ENCODE measurements at regions of chr5 and their contacts with region 1.

Region 1: DNA sequence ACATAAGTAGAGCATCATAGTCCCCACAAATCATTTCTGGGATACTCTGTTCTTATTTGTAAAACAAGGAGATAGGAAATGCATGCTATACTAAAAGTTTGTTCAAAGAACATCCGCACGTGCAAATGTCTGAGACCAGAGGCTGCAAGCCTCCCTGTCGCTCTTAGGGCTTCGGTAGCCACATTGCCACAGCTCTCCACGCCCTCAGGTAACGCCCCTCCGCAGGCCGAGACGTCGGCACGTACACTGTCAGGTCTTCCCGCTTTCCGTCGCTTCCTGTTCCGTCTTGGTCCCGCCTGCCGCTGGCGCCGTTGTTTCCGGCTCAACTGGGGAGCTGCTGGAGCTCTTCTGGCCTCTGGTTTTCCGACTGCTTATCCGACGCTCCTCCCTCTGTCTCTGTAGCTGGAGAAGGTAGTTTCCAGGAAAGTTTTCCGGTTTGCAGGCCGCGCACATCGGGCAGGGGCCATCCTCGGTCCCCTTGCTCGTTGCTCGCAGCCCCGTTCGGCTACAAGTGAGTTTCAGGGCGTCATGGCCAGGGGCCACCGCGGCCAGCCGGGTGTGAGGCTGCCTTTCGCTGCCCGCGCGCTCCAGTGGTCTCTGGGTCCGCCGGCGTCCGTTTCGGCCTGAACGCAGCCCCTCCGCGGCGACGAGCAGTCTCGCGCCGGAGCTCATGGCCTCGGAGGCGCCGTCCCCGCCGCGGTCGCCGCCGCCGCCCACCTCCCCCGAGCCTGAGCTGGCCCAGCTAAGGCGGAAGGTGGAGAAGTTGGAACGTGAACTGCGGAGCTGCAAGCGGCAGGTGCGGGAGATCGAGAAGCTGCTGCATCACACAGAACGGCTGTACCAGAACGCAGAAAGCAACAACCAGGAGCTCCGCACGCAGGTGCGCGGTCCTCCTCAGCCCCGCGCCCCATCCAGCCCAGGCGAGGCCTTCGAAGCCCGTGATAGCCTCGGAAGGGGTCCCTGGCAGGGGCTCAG is at the start of gene AGGF1:
- DNase-seq: peak; percentile 95
- H3K4me3 ChIP-seq: peak within 1 kb of the TSS; percentile 89 to 98 (median 92)
- H3K27ac ChIP-seq: peak within 1 kb of the TSS; percentile 93 to 96 (median 96)
- H3K4me1 ChIP-seq: peaks cover 6 to 19% (median 11%) of the 10 kb centered on the region in 4 donors
- H3K27me3 ChIP-seq: no peaks in the 10 kb centered on the region
- CTCF ChIP-seq: no peak
- EP300 ChIP-seq: no peak
- POLR2A ChIP-seq: peak; percentile 85
- total RNA-seq, gene AGGF1: 30.6 to 69.6 (median 50.1) TPM

Region 2: DNA sequence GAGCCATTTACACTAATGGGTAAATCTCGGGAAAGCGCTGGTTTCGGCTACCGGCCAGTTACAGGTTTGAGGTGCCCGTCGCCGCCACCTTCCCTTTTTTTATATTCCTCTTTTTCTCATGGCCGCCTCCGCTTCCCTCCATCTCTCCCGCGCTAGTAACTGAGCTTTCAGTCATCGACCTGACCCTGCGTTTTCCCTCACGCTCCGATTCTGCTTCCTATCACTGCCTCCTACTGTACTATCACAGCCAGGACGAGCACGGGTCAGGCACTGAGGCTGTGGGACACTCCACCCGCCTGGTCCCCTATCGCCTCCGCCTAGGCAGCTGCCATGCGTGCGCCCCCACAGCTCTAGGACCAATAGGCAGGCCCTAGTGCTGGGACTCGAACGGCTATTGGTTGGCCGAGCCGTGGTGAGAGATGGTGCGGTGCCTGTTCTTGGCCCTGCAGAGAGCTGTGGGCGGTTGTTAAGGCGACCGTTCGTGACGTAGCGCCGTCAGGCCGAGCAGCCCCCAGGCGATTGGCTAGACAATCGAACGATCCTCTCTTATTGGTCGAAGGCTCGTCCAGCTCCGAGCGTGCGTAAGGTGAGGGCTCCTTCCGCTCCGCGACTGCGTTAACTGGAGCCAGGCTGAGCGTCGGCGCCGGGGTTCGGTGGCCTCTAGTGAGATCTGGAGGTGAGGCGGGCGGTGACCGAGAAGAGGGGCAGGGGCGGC is 1693.6 kb before region 1 on chr5 and contains the start of gene HMGCR:
- in situ Hi-C with region 1: no loop called
- intact Hi-C with region 1: loop called (anchors 10 kb)
- DNase-seq: peak; percentile 99
- H3K4me3 ChIP-seq: peak within 1 kb of the TSS; percentile 70 to 92 (median 78)
- H3K27ac ChIP-seq: peak within 1 kb of the TSS; percentile 88 to 96 (median 93)
- H3K4me1 ChIP-seq: peaks cover 0 to 41% (median 12%) of the 10 kb centered on the region in 4 donors
- H3K27me3 ChIP-seq: no peaks in the 10 kb centered on the region
- CTCF ChIP-seq: peak in 3 of 5 experiments; percentile 5 to 57 (median 20)
- EP300 ChIP-seq: no peak
- POLR2A ChIP-seq: peak; percentile 95
- total RNA-seq, gene HMGCR: 44.9 to 205 (median 99.5) TPM

Region 3: GRCh38 chr5:75753182-75753581 is 1277.2 kb before region 1 on chr5:
- in situ Hi-C with region 1: no loop called
- intact Hi-C with region 1: no loop called
- DNase-seq: no peak
- H3K4me3 ChIP-seq: no peak overlapping the region
- H3K27ac ChIP-seq: no peak overlapping the region
- H3K4me1 ChIP-seq: no peaks in the 10 kb centered on the region
- H3K27me3 ChIP-seq: peaks cover 11% of the 10 kb centered on the region
- CTCF ChIP-seq: no peak
- EP300 ChIP-seq: no peak
- POLR2A ChIP-seq: no peak

Region 4: GRCh38 chr5:76867827-76868693 is 162.3 kb before region 1 on chr5:
- in situ Hi-C with region 1: no loop called
- intact Hi-C with region 1: no loop called
- DNase-seq: peak; percentile 70
- H3K4me3 ChIP-seq: no peak overlapping the region
- H3K27ac ChIP-seq: no peak overlapping the region
- H3K4me1 ChIP-seq: peaks cover 0 to 7% (median 0%) of the 10 kb centered on the region in 4 donors
- H3K27me3 ChIP-seq: no peaks in the 10 kb centered on the region
- CTCF ChIP-seq: peak; percentile 60 to 78 (median 73)
- EP300 ChIP-seq: no peak
- POLR2A ChIP-seq: no peak

Region 5: DNA sequence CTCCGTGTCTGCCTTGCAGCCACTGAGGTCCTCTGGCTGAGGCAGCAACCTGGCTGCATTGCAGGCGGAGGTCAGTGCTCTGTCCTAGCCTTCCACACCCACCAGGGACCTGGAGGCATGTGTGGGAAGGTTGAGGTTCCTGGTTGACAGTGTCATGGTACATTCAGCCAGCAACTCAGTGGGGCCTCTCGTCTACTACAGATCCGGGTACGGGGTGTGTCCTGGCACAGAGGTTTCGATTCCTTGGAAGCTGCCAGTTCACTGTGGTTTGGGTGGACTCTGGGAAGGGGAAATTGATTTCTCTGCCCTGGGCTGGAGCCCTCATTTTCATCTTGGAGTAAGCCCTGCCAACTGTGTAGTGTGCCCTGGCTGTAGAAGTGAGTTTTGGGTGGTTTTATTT is 225.2 kb after region 1 on chr5:
- in situ Hi-C with region 1: no loop called
- intact Hi-C with region 1: no loop called
- DNase-seq: peak; percentile 13
- H3K4me3 ChIP-seq: no peak overlapping the region
- H3K27ac ChIP-seq: no peak overlapping the region
- H3K4me1 ChIP-seq: no peaks in the 10 kb centered on the region
- H3K27me3 ChIP-seq: no peaks in the 10 kb centered on the region
- CTCF ChIP-seq: no peak
- EP300 ChIP-seq: no peak
- POLR2A ChIP-seq: no peak

Region 6: GRCh38 chr5:77449277-77449676 is 418.9 kb after region 1 on chr5:
- in situ Hi-C with region 1: no loop called
- intact Hi-C with region 1: no loop called
- DNase-seq: no peak
- H3K4me3 ChIP-seq: no peak overlapping the region
- H3K27ac ChIP-seq: peak overlapping the region in 2 of 4 donors; percentile 2 to 17
- H3K4me1 ChIP-seq: no peaks in the 10 kb centered on the region
- H3K27me3 ChIP-seq: no peaks in the 10 kb centered on the region
- CTCF ChIP-seq: no peak
- EP300 ChIP-seq: no peak
- POLR2A ChIP-seq: no peak

Measured in transverse colon (tissue), 4 donors.